Activated CD4-positive, alpha-beta memory T cell treated with anti-CD3 and anti-CD28 coated beads for 36 hours (primary cell): ENCODE measurements at regions of chr11 and their contacts with region 1.

Region 1: DNA sequence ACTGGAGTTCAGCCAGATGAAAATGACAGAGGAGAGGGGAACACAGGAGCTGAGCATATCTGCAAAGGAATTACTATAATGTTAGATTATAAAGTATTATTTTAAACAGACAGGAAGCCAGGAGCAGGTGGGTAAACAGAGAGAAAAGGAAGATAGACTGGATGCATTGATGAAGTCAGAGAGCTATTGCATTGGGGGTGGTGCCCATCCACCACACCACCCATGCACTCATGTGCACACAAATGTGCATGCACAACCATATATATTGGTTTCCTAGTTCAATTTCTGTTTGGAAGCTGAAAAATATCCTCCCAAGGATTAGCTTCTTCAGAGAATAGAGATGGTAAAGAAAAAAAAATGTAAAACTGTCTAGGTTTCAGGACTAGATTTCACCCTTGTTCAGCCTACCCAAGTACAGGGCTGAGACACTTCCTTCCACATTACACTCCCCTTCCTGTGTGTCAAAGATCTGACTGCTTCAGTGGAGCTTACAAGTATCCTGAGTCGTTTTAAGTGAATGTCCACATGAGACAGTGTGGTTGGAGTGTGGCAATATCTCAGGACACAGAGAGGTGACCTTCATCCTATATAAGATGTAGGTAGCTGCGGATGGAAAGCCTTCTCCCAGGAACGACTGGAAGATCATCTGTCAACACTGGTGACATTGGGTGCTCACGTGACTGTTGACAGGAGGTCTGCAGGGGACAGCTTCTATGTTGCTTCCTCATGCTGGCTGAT is 12.2 kb upstream of the SMPD1 start:
- DNase-seq: no peak
- H3K4me3 Mint-ChIP-seq: no peak overlapping the region
- H3K27ac Mint-ChIP-seq: peak overlapping the region; percentile 25
- H3K4me1 Mint-ChIP-seq: peaks cover 23% of the 10 kb centered on the region
- H3K27me3 Mint-ChIP-seq: no peaks in the 10 kb centered on the region

Region 2: GRCh38 chr11:6389921-6390724 is 12.1 kb after region 1 on chr11 and contains the start of gene SMPD1:
- CTCF ChIA-PET with region 1: interaction called, 65 read pairs
- POLR2A ChIA-PET with region 1: interaction called, 10 read pairs
- intact Hi-C with region 1: no loop called
- DNase-seq: peak; percentile 96
- H3K4me3 Mint-ChIP-seq: peak within 1 kb of the TSS; percentile 85
- H3K27ac Mint-ChIP-seq: peak within 1 kb of the TSS; percentile 94
- H3K4me1 Mint-ChIP-seq: peaks cover 45% of the 10 kb centered on the region
- H3K27me3 Mint-ChIP-seq: no peaks in the 10 kb centered on the region
- total RNA-seq, gene SMPD1: 23.4 to 23.8 TPM

Region 3: DNA sequence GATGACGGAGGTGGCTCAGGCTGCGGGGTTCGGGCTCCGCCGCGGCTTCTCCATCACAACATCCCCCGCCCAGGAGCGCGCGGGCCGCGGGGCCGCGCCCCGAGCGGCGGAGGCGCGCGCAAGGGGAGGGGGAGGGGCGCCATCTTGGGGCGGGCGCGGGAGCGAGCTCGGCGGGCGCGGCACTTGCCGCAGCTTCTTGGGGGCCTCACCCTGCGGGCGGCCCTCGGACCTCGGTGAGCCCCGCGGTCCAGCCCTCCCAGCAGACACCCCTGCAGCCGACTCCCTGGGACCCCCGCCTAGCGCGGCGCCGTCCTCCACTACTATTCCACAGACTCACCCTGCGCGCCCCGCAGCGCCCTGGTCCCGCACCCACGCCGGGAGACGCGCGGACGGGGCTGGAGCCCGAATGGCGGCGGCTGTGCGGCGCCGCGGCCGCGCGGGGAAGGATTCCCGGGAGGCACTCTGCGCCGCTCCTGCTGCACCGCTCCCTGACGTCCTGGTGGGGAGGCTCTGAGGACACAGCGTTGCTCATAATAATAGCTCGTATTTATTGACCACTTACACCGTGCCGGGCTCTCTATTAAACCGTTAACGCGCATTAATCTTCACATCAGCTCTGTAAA is 41.0 kb after region 1 on chr11 and contains the start of gene APBB1:
- CTCF ChIA-PET with region 1: interaction called, 37 read pairs
- POLR2A ChIA-PET with region 1: interaction called, 5 read pairs
- intact Hi-C with region 1: no loop called
- DNase-seq: peak; percentile 78
- H3K4me3 Mint-ChIP-seq: peak within 1 kb of the TSS; percentile 73
- H3K27ac Mint-ChIP-seq: peak within 1 kb of the TSS; percentile 61
- H3K4me1 Mint-ChIP-seq: peaks cover 8% of the 10 kb centered on the region
- H3K27me3 Mint-ChIP-seq: peaks cover 5% of the 10 kb centered on the region
- total RNA-seq, gene APBB1: 51.6 to 55.3 TPM

Region 4: DNA sequence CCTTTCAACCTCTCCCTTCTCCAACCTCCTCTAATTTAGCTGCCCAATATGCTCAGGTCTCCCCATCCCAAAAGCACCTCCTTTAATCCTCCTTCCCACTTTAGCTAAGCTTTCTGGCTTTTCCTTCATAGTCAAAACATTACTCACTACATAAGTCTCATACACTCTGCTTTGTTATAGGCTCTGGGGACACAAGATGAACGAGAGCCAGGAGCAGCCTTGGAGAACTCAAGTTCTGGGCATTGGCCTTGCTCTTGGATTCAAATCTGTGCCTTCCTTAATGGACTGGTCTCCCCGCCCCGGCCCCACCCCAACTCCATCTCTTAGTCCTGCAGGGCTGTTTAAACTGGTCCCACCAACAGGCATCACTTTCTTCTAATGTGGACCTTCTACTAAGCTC is 74.1 kb after region 1 on chr11:
- CTCF ChIA-PET with region 1: interaction called, 661 read pairs
- POLR2A ChIA-PET with region 1: no interaction called
- intact Hi-C with region 1: no loop called
- DNase-seq: no peak
- H3K4me3 Mint-ChIP-seq: no peak overlapping the region
- H3K27ac Mint-ChIP-seq: no peak overlapping the region
- H3K4me1 Mint-ChIP-seq: no peaks in the 10 kb centered on the region
- H3K27me3 Mint-ChIP-seq: no peaks in the 10 kb centered on the region

Region 5: DNA sequence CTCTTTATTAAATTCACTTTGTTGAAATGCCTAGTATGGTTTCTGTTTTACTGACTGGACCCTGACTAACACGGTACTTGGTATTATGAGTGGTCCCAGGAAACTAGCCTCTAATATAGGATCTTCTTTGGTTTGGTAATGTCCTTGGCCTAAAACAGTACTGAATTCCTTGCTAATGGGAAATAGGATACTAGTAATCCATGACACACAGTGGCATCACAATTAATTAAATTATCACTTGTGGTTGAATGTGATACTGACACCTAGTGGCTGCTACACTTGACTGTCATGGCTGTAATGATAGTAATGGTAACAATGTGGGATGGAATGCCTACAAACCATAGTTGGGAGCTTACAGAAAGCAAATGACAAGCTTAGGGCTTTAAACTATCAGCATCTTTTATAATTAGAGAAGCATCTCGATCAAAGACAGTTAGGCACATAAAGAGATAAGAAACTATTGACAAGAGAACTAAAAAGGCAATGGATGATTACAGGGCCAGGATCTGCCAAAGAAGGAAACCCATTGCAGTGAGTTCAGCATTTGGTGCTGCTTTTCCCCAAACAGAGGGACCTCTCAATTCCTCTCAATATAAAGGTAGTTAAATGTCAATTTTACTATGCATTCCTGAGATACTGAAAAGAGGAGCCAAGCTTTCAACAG is 127.6 kb after region 1 on chr11:
- CTCF ChIA-PET with region 1: interaction called, 123 read pairs
- POLR2A ChIA-PET with region 1: no interaction called
- intact Hi-C with region 1: loop called (anchors 1 kb)
- DNase-seq: no peak
- H3K4me3 Mint-ChIP-seq: no peak overlapping the region
- H3K27ac Mint-ChIP-seq: no peak overlapping the region
- H3K4me1 Mint-ChIP-seq: peaks cover 1% of the 10 kb centered on the region
- H3K27me3 Mint-ChIP-seq: no peaks in the 10 kb centered on the region

Region 6: DNA sequence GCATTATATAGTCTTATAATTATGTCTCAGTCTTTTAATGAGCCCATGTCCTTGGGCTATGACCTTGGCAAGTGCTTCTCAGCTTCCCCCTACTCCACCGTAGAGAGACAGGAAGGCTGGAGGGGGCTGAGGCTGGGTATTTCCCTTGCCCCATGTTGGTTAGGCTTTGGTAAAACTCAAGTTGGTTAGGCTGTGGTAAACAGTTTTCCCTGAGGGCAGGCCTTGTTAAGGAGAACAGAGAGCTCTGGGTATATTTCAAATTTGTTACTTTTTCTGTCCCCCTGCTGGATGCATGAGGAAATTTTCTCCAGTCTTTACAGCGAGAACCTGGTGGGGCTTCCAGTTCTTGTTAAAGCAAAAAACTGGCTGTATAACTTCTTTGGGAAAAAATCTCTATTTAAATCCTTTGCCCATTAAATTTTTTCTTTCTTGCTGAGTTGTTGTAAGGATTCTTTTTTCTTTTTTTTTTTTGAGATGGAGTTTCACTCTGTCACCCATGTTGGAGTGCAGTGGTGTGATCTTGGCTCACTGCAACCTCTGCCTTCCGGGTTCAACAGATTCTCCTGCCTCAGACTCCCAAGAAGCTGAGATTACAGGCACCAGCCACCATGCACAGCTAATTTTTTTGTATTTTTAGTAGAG is 289.8 kb after region 1 on chr11:
- CTCF ChIA-PET with region 1: interaction called, 17 read pairs
- POLR2A ChIA-PET with region 1: no interaction called
- intact Hi-C with region 1: no loop called
- DNase-seq: peak; percentile 66
- H3K4me3 Mint-ChIP-seq: no peak overlapping the region
- H3K27ac Mint-ChIP-seq: peak overlapping the region; percentile 50
- H3K4me1 Mint-ChIP-seq: peaks cover 60% of the 10 kb centered on the region
- H3K27me3 Mint-ChIP-seq: no peaks in the 10 kb centered on the region

Region 7: GRCh38 chr11:6737872-6738466 is 359.9 kb after region 1 on chr11:
- CTCF ChIA-PET with region 1: interaction called, 14 read pairs
- POLR2A ChIA-PET with region 1: no interaction called
- intact Hi-C with region 1: no loop called
- DNase-seq: peak; percentile 67
- H3K4me3 Mint-ChIP-seq: no peak overlapping the region
- H3K27ac Mint-ChIP-seq: peak overlapping the region; percentile 53
- H3K4me1 Mint-ChIP-seq: peaks cover 89% of the 10 kb centered on the region
- H3K27me3 Mint-ChIP-seq: no peaks in the 10 kb centered on the region